AG04450 (cell line): ENCODE measurements at regions of chr2 and their contacts with region 1.

Region 1: DNA sequence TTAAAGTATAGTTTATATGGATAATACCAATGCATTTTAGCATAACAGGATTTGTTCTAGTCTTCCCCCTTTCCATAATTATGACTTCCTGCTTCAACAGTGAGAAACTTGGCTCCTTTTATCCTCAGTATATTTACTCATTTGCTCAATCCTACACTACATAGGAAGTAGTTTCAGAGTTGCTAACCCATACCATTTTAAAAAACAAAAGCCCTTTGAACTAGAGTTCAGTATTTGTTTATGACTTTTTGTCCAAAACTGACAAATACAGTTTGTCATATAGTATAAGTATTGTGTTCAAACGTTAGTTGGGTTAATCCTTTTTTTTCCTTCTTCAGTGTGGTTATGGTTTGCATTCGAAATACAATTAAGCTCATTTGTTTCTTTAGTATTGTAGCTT is 5.9 kb upstream of the DNAJC27 start:
- DNase-seq: no peak
- H3K4me3 ChIP-seq: no peak overlapping the region
- H3K27ac ChIP-seq: no peak overlapping the region
- H3K27me3 ChIP-seq: peaks cover 4% of the 10 kb centered on the region
- CTCF ChIP-seq: no peak

Region 2: GRCh38 chr2:24830371-24830770 is 147.3 kb before region 1 on chr2:
- CTCF ChIA-PET with region 1: no interaction called
- POLR2A ChIA-PET with region 1: no interaction called
- DNase-seq: no peak
- H3K4me3 ChIP-seq: no peak overlapping the region
- H3K27ac ChIP-seq: no peak overlapping the region
- H3K27me3 ChIP-seq: no peaks in the 10 kb centered on the region
- CTCF ChIP-seq: peak; percentile 15; the same call in 1 of the 2 replicates

Region 3: DNA sequence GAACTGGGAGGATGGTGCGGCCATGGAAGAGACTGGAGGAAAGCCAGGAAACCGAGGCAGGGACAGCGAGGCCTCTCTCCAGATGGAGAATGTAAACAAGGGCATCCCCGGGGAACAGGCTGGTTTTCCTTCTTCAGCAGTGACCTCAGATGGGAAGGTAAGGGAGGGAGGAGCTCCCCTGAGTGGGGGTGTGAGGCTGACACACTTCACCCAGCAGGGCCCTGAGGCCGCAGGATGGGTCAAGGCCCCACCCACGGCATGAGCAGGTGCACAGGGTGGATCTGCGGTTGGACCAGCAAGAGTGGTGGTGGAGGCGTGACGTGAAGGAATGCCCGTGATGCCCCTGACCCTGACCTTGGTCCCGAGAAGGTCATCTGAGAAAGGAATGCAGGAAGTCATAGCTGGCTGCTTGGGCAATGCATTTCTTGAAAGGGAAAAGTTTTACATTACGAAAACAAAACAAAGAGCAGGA is 105.7 kb before region 1 on chr2:
- CTCF ChIA-PET with region 1: no interaction called
- POLR2A ChIA-PET with region 1: no interaction called
- DNase-seq: no peak
- H3K4me3 ChIP-seq: no peak overlapping the region
- H3K27ac ChIP-seq: no peak overlapping the region
- H3K27me3 ChIP-seq: no peaks in the 10 kb centered on the region
- CTCF ChIP-seq: no peak

Region 4: GRCh38 chr2:25098670-25099486 is 121.2 kb after region 1 on chr2:
- CTCF ChIA-PET with region 1: interaction called, 11 read pairs
- POLR2A ChIA-PET with region 1: no interaction called
- DNase-seq: peak; percentile 18
- H3K4me3 ChIP-seq: no peak overlapping the region
- H3K27ac ChIP-seq: no peak overlapping the region
- H3K27me3 ChIP-seq: no peaks in the 10 kb centered on the region
- CTCF ChIP-seq: no peak

Region 5: GRCh38 chr2:25131567-25132298 is 154.1 kb after region 1 on chr2:
- CTCF ChIA-PET with region 1: interaction called, 229 read pairs
- POLR2A ChIA-PET with region 1: interaction called, 9 read pairs
- DNase-seq: no peak
- H3K4me3 ChIP-seq: no peak overlapping the region
- H3K27ac ChIP-seq: peak overlapping the region; percentile 21
- H3K27me3 ChIP-seq: peaks cover 20% of the 10 kb centered on the region
- CTCF ChIP-seq: no peak

Region 6: DNA sequence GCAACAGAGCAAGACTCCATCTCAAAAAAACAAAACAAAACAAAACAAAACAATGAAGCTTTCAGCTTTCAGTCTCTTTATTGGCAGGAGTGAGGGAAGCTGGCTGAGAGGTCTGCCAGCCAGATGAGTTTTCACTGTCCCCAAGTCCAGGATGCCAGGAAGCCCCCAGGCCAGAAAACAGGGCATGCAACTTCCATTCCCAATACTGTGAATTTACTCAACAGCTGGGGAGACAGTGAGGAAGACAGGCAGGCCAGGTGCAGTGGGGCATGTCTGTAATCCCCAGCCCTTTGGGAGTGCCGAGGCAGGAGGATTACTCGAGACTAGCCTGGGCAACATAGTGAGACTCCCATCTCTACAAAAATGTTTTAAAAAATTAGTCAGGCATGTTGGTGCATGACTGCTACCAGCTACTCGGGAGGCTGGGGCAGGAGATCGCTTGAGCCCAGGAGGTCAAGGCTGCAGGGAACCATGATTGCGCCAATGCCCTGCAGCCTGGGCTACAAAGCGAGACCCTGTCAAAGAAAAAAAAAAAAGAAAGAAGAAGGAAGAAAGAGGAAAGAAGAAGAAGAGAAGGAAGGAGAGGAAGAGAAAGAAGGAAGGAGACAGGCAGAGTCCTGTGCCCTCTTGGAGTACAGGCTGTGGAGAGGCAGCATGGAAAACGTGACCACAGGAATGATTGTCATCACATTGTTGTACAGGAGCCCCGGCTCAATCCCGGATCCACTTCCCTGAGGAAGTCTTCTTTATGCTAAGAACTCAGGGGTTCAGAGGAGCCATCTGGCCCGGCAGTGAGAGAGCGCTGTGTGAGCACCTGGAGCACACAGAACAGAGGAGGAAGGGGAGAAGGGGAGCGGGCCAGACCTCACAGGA is 219.9 kb after region 1 on chr2:
- CTCF ChIA-PET with region 1: interaction called, 90 read pairs
- POLR2A ChIA-PET with region 1: no interaction called
- DNase-seq: no peak
- H3K4me3 ChIP-seq: no peak overlapping the region
- H3K27ac ChIP-seq: no peak overlapping the region
- H3K27me3 ChIP-seq: no peaks in the 10 kb centered on the region
- CTCF ChIP-seq: no peak